Dendritic cell treated with granulocyte-macrophage colony-stimulating factor and Interleukin-4, amounts not matched to agents 40 ng/mL and 50 ng/mL, for 4 days (primary cell): ENCODE measurements at regions of chr13 and their contacts with region 1.

Region 1: DNA sequence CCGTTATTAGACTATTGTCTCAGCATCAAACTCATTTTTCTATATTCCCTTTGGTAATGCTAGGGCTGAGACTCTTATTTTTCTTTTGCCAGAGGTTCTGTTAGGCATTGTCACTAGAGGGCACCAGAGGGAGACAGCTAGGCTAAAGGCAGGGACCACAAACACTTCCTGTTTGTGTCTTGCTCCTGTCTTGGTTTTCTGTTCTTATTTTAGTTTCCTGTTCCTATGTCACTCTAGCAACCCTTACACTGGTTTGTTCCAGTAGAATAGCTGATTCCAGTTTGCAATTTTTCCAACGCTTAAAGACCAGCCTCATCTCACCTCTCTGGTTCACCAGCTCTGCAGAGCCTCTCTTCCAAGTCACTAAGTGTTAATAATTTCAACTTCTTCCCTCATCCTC is 772.0 kb downstream of the DIAPH3 start:
- H3K4me3 Mint-ChIP-seq: no peak overlapping the region
- H3K27ac Mint-ChIP-seq: no peak overlapping the region
- H3K4me1 Mint-ChIP-seq: no peaks in the 10 kb centered on the region
- H3K27me3 Mint-ChIP-seq: peaks cover 2% of the 10 kb centered on the region

Region 2: GRCh38 chr13:59447846-59448620 is 56.3 kb after region 1 on chr13:
- intact Hi-C with region 1: no loop called
- H3K4me3 Mint-ChIP-seq: no peak overlapping the region
- H3K27ac Mint-ChIP-seq: no peak overlapping the region
- H3K4me1 Mint-ChIP-seq: peaks cover 26% of the 10 kb centered on the region
- H3K27me3 Mint-ChIP-seq: peaks cover 1% of the 10 kb centered on the region

Region 3: DNA sequence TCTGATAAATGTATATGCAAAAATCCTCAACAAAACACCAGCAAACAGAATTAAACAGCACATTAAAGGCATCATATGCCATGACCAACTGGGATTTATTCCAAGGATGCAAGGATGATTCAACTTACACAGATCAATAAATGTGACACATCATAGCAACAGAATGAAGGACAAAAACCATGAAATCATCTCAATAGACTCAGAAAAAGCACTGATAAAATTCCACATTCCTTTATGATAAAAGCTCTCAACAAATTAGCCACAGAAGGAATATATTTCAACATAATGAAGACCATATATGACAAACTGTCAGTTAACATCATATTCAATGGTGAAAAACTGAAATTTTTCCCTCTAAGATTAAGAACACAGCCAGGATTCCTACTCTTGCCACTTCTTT is 80.4 kb after region 1 on chr13:
- intact Hi-C with region 1: no loop called
- H3K4me3 Mint-ChIP-seq: no peak overlapping the region
- H3K27ac Mint-ChIP-seq: no peak overlapping the region
- H3K4me1 Mint-ChIP-seq: peaks cover 11% of the 10 kb centered on the region
- H3K27me3 Mint-ChIP-seq: peaks cover 2% of the 10 kb centered on the region

Region 4: GRCh38 chr13:59823486-59823885 is 431.8 kb after region 1 on chr13:
- intact Hi-C with region 1: no loop called
- H3K4me3 Mint-ChIP-seq: no peak overlapping the region
- H3K27ac Mint-ChIP-seq: no peak overlapping the region
- H3K4me1 Mint-ChIP-seq: no peaks in the 10 kb centered on the region
- H3K27me3 Mint-ChIP-seq: no peaks in the 10 kb centered on the region

Region 5: GRCh38 chr13:60335531-60335930 is 943.8 kb after region 1 on chr13:
- intact Hi-C with region 1: loop called (anchors 5 kb)
- H3K4me3 Mint-ChIP-seq: no peak overlapping the region
- H3K27ac Mint-ChIP-seq: no peak overlapping the region
- H3K4me1 Mint-ChIP-seq: no peaks in the 10 kb centered on the region
- H3K27me3 Mint-ChIP-seq: peaks cover 6% of the 10 kb centered on the region